HCT116 (cell line): ENCODE measurements at regions of chr11 and their contacts with region 1.

Region 1: GRCh38 chr11:128630367-128631230 is 43.2 kb upstream of the ETS1 start:
- DNase-seq: peak; percentile 56
- ATAC-seq: peak; percentile 87
- H3K4me3 ChIP-seq: no peak overlapping the region
- H3K27ac ChIP-seq: no peak overlapping the region
- H3K4me1 ChIP-seq: no peaks in the 10 kb centered on the region
- H3K27me3 ChIP-seq: no peaks in the 10 kb centered on the region; the same call in 1 of the 2 replicates
- CTCF ChIP-seq: peak; percentile 79 to 95 (median 89)
- POLR2A ChIP-seq: no peak
- RAD21 ChIP-seq: peak; percentile 93

Region 2: GRCh38 chr11:128157423-128158298 is 472.9 kb before region 1 on chr11:
- CTCF ChIA-PET with region 1: interaction called, 15 read pairs
- POLR2A ChIA-PET with region 1: no interaction called
- RAD21 ChIA-PET with region 1: no interaction called
- intact Hi-C with region 1: loop called (anchors 1 kb)
- DNase-seq: peak; percentile 72
- ATAC-seq: peak; percentile 90
- H3K4me3 ChIP-seq: no peak overlapping the region
- H3K27ac ChIP-seq: no peak overlapping the region
- H3K4me1 ChIP-seq: no peaks in the 10 kb centered on the region; a peak in 1 of 4 replicates
- H3K27me3 ChIP-seq: peaks cover 18% of the 10 kb centered on the region; the same call in 1 of the 2 replicates
- CTCF ChIP-seq: peak; percentile 73 to 99 (median 94)
- POLR2A ChIP-seq: no peak
- RAD21 ChIP-seq: peak; percentile 78

Region 3: GRCh38 chr11:128290106-128290840 is 340.3 kb before region 1 on chr11:
- CTCF ChIA-PET with region 1: interaction called, 9 read pairs
- POLR2A ChIA-PET with region 1: no interaction called
- RAD21 ChIA-PET with region 1: interaction called in 1 of 2 experiments, 3 read pairs
- intact Hi-C with region 1: loop called (anchors 1 kb)
- DNase-seq: peak; percentile 46
- ATAC-seq: peak; percentile 95
- H3K4me3 ChIP-seq: no peak overlapping the region
- H3K27ac ChIP-seq: no peak overlapping the region
- H3K4me1 ChIP-seq: no peaks in the 10 kb centered on the region
- H3K27me3 ChIP-seq: peaks cover 21% of the 10 kb centered on the region; the same call in 1 of the 2 replicates
- CTCF ChIP-seq: peak; percentile 67 to 81 (median 80)
- POLR2A ChIP-seq: no peak
- RAD21 ChIP-seq: peak; percentile 90

Region 4: DNA sequence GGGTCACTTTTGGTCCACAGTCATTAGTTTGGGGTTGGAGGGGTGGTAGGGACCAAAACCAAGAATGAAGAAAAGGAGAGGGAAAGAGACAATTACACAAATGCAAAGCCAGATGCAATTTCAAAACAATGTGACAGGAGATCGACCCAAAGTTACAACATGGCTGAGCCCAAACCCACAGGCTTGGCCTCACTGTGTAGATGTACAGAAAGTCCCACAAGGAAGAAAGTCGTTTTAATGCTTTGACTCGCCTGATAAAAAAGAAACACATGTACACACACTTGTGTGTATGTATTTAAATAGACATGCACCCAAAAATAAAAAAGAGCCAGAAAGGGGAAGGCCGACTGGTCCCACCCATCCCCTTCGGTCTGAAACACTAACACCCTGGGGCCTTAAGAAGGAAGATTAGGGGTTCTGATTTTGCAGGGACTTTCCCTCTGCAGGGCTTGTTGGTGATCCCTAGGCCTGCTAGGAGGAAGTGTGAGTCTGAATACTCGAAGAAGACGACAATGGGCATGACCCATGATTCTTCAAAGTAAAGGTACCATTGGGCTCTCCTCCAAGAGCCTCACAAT is 147.3 kb before region 1 on chr11:
- CTCF ChIA-PET with region 1: interaction called, 15 read pairs
- POLR2A ChIA-PET with region 1: no interaction called
- RAD21 ChIA-PET with region 1: no interaction called
- intact Hi-C with region 1: loop called (anchors 1 kb)
- DNase-seq: no peak
- ATAC-seq: no peak
- H3K4me3 ChIP-seq: no peak overlapping the region
- H3K27ac ChIP-seq: no peak overlapping the region
- H3K4me1 ChIP-seq: no peaks in the 10 kb centered on the region
- H3K27me3 ChIP-seq: no peaks in the 10 kb centered on the region
- CTCF ChIP-seq: no peak
- POLR2A ChIP-seq: no peak
- RAD21 ChIP-seq: no peak

Region 5: DNA sequence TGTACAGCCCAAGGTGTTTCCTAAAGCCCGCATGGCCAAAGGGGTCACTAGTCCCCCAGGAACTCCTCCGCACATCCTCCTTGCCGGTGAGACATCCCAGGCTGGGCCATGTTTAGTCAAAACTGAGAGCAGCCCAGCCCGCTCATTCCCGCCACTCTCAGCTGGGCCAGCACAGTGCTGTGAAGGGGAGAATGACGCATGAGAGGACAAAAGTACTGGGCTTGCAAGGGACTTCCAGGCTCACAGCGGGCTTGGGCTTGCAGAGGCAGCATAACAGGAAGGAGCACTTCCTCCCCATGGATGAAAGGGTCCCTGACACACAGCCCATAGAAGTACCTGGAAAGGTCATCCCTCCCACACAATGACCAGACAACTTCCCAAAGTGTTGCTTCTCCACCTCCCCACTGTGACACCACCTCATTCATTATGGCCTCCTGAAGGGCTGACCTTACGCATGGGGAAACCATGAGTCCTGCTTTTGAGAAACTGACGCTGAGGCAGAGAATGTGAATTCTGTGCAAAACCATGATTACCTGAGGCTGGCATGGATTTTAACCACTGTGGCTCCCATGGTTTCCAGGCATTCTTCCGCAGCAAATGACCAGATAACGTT is 62.3 kb before region 1 on chr11:
- CTCF ChIA-PET with region 1: no interaction called
- POLR2A ChIA-PET with region 1: no interaction called
- RAD21 ChIA-PET with region 1: no interaction called
- intact Hi-C with region 1: no loop called
- DNase-seq: no peak
- ATAC-seq: no peak
- H3K4me3 ChIP-seq: no peak overlapping the region
- H3K27ac ChIP-seq: no peak overlapping the region
- H3K4me1 ChIP-seq: no peaks in the 10 kb centered on the region
- H3K27me3 ChIP-seq: peaks cover 25% of the 10 kb centered on the region
- CTCF ChIP-seq: no peak
- POLR2A ChIP-seq: no peak
- RAD21 ChIP-seq: no peak